ENCODE measurements at regions of chr7 and their contacts with region 1.

Region 1: GRCh38 chr7:29988424-29989256 is 961 bp downstream of the SCRN1 start:
- DNase-seq: peak; percentile 51
- ATAC-seq: peak; percentile 17
- H3K4me3 ChIP-seq: peak overlapping the region; percentile 97
- H3K27ac ChIP-seq: peak overlapping the region; percentile 94
- H3K4me1 ChIP-seq: peaks cover 41% of the 10 kb centered on the region
- H3K27me3 ChIP-seq: no peaks in the 10 kb centered on the region
- CTCF ChIP-seq: no peak

Region 2: DNA sequence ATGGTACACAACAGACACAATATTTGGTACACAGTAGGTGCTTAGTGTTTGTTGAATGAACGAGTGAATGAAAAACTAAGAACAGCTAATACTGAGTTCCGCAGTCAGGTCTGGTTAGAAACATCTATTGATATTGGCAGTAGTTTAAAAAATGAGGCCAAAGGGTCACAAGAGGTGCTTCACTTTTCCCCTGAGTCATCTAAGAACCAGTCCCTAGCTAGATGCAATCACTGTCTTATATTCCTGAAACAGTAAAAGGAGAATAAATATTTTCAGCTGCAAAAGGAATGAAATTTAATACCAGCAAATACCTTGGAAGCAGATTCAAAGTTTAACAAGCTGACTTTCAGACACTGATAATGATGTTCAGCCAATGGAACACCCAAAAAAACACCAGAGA is 53.5 kb before region 1 on chr7:
- CTCF ChIA-PET with region 1: no interaction called
- POLR2A ChIA-PET with region 1: no interaction called
- intact Hi-C with region 1: loop called (anchors 5 kb)
- DNase-seq: peak; percentile 83
- ATAC-seq: peak; percentile 71
- H3K4me3 ChIP-seq: no peak overlapping the region
- H3K27ac ChIP-seq: peak overlapping the region; percentile 49
- H3K4me1 ChIP-seq: peaks cover 43% of the 10 kb centered on the region
- H3K27me3 ChIP-seq: no peaks in the 10 kb centered on the region
- CTCF ChIP-seq: no peak

Region 3: DNA sequence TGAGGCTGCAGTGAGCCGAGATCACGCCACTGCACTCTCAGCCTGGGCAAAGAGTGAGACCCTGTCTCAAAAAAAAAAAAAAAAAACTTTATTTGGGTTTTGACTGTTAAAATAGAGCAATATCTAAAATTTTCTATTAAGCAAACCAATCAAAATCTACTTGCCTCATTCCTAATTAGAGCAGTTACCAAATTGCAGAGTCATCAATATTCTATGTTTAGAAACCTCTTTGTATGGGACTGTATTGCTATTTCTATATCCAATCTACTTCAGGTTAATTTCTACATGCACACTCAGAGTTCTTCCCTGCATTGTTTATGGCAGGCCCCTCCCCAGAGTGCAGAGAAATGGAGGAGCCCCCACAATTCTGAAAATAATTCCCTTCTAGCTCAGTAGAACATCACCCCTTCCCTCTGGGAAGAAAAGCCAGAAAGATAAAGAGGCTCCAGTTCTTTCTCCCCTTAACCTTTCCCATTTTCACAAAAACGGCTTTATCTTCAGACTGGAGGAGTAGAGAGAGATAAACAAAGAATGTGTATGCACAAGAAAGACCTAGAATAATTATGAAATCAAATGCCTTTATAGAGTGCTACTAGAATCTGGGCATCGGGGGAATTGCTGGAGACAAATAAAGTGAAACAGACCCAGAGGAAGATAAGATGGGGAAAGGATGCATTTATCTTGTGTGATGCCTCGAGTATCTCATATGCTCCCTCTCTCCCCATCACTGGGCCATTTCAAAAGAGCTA is 16.9 kb before region 1 on chr7:
- CTCF ChIA-PET with region 1: no interaction called
- POLR2A ChIA-PET with region 1: interaction called, 12 read pairs
- intact Hi-C with region 1: no loop called
- DNase-seq: no peak
- ATAC-seq: no peak
- H3K4me3 ChIP-seq: no peak overlapping the region
- H3K27ac ChIP-seq: no peak overlapping the region
- H3K4me1 ChIP-seq: peaks cover 21% of the 10 kb centered on the region
- H3K27me3 ChIP-seq: no peaks in the 10 kb centered on the region
- CTCF ChIP-seq: no peak

Region 4: DNA sequence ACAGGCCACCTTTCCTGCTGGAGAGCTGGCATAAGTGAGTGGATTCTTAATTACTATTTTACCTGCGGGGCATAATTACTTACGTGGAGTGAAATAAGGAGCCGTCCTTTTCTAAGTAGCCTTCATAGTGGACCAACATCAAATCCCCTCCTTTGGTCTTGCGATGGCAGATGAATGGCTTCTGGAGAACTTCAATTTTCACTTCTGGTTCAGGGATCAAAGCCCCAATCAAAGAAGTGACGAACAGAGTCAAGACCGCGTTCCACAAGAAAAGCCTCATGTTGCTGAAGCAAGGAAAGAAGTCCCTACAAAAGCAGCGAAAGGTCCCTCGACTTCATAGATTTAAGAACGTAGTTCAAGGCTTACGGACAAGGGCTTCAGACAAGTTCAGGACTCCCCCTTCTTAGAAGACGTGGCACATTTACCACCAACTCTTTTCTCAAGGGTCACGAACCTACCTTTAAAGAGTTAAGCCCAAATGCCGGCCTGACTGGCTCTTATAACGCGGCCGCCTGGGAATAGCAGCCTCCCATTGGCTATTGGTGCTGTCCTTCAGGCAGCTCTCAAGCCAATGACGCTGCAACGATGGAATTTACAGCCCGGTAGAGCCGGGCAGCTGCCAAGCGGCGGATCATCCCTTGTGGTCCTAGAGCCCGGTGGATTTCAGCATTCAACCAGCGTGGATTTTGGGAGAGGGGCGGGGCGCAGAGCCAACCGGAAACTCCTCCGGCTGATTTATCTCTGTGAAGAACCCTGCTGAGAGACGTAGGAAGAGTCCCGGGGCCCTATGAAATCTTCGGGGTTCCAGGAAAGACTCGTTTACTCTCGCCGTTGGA is 37.8 kb after region 1 on chr7 and contains the start of gene FKBP14:
- CTCF ChIA-PET with region 1: no interaction called
- POLR2A ChIA-PET with region 1: interaction called, 3 read pairs
- intact Hi-C with region 1: loop called (anchors 1 kb)
- DNase-seq: peak; percentile 98
- ATAC-seq: peak; percentile 83
- H3K4me3 ChIP-seq: peak within 1 kb of the TSS; percentile 84
- H3K27ac ChIP-seq: peak within 1 kb of the TSS; percentile 64
- H3K4me1 ChIP-seq: peaks cover 20% of the 10 kb centered on the region; the same call in 1 of the 2 replicates
- H3K27me3 ChIP-seq: no peaks in the 10 kb centered on the region
- CTCF ChIP-seq: no peak
- total RNA-seq, gene FKBP14: 9.0 and 10.1 TPM in 2 replicates

Region 5: GRCh38 chr7:30074422-30075030 is 85.9 kb after region 1 on chr7:
- CTCF ChIA-PET with region 1: no interaction called
- POLR2A ChIA-PET with region 1: no interaction called
- intact Hi-C with region 1: no loop called
- DNase-seq: peak; percentile 70
- ATAC-seq: peak; percentile 73
- H3K4me3 ChIP-seq: no peak overlapping the region
- H3K27ac ChIP-seq: no peak overlapping the region
- H3K4me1 ChIP-seq: no peaks in the 10 kb centered on the region
- H3K27me3 ChIP-seq: no peaks in the 10 kb centered on the region
- CTCF ChIP-seq: peak; percentile 78

Region 6: GRCh38 chr7:30142710-30143109 is 154.1 kb after region 1 on chr7:
- CTCF ChIA-PET with region 1: no interaction called
- POLR2A ChIA-PET with region 1: no interaction called
- intact Hi-C with region 1: loop called (anchors 5 kb)
- DNase-seq: peak; percentile 93
- ATAC-seq: peak; percentile 76
- H3K4me3 ChIP-seq: peak overlapping the region; percentile 49
- H3K27ac ChIP-seq: peak overlapping the region; percentile 68
- H3K4me1 ChIP-seq: peaks cover 33% of the 10 kb centered on the region
- H3K27me3 ChIP-seq: no peaks in the 10 kb centered on the region
- CTCF ChIP-seq: no peak

Region 7: DNA sequence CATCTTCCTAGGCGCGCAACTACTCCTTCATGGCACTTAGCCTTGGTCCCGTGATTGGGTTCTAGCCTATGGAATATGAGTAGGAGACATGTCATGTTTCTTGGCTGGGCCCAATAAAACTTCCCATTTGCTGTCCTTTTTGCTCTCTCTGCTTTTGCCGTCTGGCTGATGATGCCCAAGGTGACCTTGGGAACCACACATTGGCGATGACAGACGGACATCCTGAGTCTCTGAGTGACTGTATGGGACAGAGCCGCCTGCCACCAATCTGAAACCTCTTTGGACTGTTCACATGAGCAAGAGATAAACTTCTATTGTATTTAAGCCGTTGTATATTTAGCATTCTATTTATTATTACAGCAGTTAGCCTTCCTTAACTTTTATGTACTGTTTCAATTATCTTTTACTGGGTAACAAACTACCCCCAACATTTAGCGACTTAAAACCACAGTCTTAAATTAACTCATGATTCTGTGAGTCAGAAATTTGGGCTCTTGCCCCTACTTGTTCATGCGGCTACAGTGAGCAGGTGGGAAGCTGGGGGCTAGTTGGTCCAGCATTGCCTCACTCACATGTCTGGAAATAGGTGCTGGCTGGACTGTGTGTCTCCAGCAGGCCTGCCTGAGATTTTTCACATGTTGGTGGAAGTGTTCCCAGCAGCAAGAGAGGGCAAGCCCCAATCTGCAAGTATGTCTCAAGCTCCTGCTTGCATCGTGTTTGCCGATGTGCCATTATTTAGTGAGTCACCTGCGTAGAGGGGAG is 418.2 kb after region 1 on chr7:
- CTCF ChIA-PET with region 1: no interaction called
- POLR2A ChIA-PET with region 1: no interaction called
- intact Hi-C with region 1: no loop called
- DNase-seq: no peak
- ATAC-seq: peak; percentile 20; the same call in 1 of the 2 replicates
- H3K4me3 ChIP-seq: no peak overlapping the region
- H3K27ac ChIP-seq: no peak overlapping the region
- H3K4me1 ChIP-seq: peaks cover 12% of the 10 kb centered on the region
- H3K27me3 ChIP-seq: no peaks in the 10 kb centered on the region
- CTCF ChIP-seq: no peak

Measured in PC-3 (cell line).